CD14-positive monocyte (primary cell): ENCODE measurements at regions of chr7 and their contacts with region 1.

Region 1: GRCh38 chr7:883055-884021 is 7.0 kb downstream of the GET4 start:
- DNase-seq: no peak
- H3K4me3 ChIP-seq: no peak overlapping the region
- H3K4me3 Mint-ChIP-seq: no peak overlapping the region
- H3K27ac ChIP-seq: no peak overlapping the region
- H3K27ac Mint-ChIP-seq: peak overlapping the region in 3 of 7 donors; percentile 2 to 61 (median 16)
- H3K4me1 ChIP-seq: peaks cover 5 to 10% of the 10 kb centered on the region in 2 donors
- H3K4me1 Mint-ChIP-seq: peaks cover 10% of the 10 kb centered on the region
- H3K27me3 ChIP-seq: no peaks in the 10 kb centered on the region
- H3K27me3 Mint-ChIP-seq: no peaks in the 10 kb centered on the region
- CTCF ChIP-seq: no peak

Region 2: GRCh38 chr7:909358-910329 is 26.3 kb after region 1 on chr7:
- intact Hi-C with region 1: no loop called
- DNase-seq: peak; percentile 97 to 99 (median 98)
- H3K4me3 ChIP-seq: peak overlapping the region; percentile 38 to 78 (median 54)
- H3K4me3 Mint-ChIP-seq: peak overlapping the region; percentile 72 to 78
- H3K27ac ChIP-seq: peak overlapping the region; percentile 84 to 99
- H3K27ac Mint-ChIP-seq: peak overlapping the region; percentile 92 to 97 (median 96)
- H3K4me1 ChIP-seq: peaks cover 74 to 79% of the 10 kb centered on the region in 2 donors
- H3K4me1 Mint-ChIP-seq: peaks cover 50% of the 10 kb centered on the region
- H3K27me3 ChIP-seq: no peaks in the 10 kb centered on the region
- H3K27me3 Mint-ChIP-seq: no peaks in the 10 kb centered on the region
- CTCF ChIP-seq: peak; percentile 42

Region 3: DNA sequence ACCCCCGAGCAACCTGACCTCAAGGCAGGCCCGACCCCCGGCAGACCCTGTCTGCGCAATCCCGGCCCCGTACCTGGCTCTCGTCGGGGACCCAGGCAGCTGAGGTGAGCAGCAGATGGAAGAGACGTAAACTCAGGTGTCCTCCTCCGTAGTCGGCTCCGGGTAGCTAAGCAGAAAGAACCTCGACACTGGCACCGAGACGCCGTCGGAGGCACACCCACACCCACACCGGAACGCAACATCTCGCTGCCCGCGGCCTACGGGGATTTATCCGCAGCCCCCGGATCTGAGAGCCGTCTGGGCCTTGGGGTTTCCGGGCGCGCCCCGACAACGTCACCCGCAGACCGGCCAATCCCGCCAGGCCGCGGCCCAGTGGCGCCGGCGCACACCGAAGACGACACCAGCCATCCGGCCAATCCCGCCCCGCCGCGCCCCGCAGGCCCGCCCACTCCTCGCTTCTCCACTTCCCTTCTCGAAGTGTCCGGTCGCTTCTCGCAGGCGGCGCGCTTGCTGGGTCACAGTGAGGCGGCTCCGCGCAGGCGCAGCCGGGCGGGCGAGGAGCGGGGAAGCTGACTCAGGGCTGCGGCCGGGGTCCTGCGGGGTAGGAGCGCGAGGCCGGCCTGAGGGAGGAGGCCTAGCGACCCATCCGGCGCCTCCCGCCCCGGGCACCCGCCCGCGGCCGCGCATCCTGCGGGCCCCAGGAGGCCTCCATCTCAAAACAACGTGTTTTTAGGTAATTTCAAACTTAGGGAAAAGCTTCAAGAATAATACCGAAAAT is 276.7 kb after region 1 on chr7 and contains the start of gene ZFAND2A:
- intact Hi-C with region 1: loop called (anchors 10 kb)
- DNase-seq: peak; percentile 97 to 99 (median 99)
- H3K4me3 ChIP-seq: peak within 1 kb of the TSS; percentile 75 to 99 (median 95)
- H3K4me3 Mint-ChIP-seq: peak within 1 kb of the TSS; percentile 85 to 93
- H3K27ac ChIP-seq: peak within 1 kb of the TSS; percentile 79 to 91
- H3K27ac Mint-ChIP-seq: peak within 1 kb of the TSS; percentile 90 to 98 (median 95)
- H3K4me1 ChIP-seq: peaks cover 17 to 22% of the 10 kb centered on the region in 2 donors
- H3K4me1 Mint-ChIP-seq: peaks cover 23% of the 10 kb centered on the region
- H3K27me3 ChIP-seq: no peaks in the 10 kb centered on the region
- H3K27me3 Mint-ChIP-seq: peaks cover 0 to 2% (median 0%) of the 10 kb centered on the region in 3 donors
- CTCF ChIP-seq: no peak
- polyA plus RNA-seq, gene ZFAND2A: 30.6 to 126 (median 35.1) TPM